OCI-LY7 (cell line): ENCODE measurements at regions of chr1 and their contacts with region 1.

Region 1: GRCh38 chr1:93680757-93681550 is 683 bp downstream of the BCAR3 start:
- DNase-seq: peak; percentile 88
- H3K4me3 ChIP-seq: peak overlapping the region; percentile 82
- H3K27ac ChIP-seq: peak overlapping the region; percentile 64
- H3K4me1 ChIP-seq: peaks cover 57% of the 10 kb centered on the region
- CTCF ChIP-seq: peak; percentile 78

Region 2: DNA sequence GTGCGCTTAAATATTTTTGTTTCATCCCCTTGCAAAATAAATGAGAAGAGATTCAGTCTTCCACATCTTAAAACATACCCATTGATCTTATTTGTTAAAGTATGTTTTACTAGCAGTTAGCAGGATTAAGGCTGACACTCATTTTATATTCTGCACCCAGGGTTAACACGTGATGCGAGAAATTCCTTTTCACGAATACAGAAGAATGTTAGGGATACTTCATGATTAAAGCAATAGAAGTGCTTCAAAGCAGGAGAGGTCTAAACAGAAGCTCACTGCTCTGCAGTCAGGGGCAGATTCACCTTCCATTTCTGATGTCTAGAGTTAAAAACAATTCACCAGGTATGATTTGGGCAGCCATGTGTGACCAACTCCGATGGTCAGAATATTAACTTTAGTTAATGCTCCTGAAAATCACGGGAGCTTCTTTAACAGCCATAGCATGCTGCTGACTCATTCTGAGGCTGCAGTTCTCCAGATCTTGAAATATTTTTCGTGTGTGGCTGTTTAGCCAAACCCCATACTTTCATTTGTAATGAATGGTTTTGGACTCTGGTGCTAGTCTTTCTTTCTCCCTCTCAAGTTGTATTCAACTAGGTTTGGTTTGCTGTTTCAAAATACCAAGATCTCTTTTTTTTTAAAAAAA is 19.0 kb before region 1 on chr1:
- CTCF ChIA-PET with region 1: no interaction called
- POLR2A ChIA-PET with region 1: interaction called, 9 read pairs
- intact Hi-C with region 1: loop called (anchors 2 kb)
- DNase-seq: no peak
- H3K4me3 ChIP-seq: no peak overlapping the region
- H3K27ac ChIP-seq: no peak overlapping the region
- H3K4me1 ChIP-seq: no peaks in the 10 kb centered on the region
- CTCF ChIP-seq: no peak

Region 3: DNA sequence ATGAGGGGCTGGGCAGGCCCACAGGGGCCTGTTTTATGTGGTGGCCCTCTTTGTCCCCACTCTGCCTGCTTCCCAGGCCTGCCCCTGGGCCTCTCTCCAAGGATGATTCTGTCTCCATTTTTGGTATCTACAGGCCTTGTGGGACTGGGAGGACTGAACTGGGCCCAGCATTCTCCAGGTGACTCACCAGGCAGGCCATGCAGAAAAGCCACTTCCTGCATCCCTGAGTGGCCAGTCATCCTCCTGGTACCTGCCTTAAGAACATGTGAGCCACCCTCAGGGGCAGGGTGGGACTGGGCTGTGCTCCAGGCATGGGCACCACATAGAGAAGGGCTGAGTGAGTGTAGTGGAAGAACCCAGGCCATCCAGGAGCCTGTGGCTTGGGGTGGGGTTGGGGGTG is 20.7 kb after region 1 on chr1:
- CTCF ChIA-PET with region 1: interaction called, 12 read pairs
- POLR2A ChIA-PET with region 1: interaction called, 497 read pairs
- intact Hi-C with region 1: loop called (anchors 1 kb)
- DNase-seq: no peak
- H3K4me3 ChIP-seq: no peak overlapping the region
- H3K27ac ChIP-seq: no peak overlapping the region
- H3K4me1 ChIP-seq: peaks cover 78% of the 10 kb centered on the region
- CTCF ChIP-seq: no peak

Region 4: GRCh38 chr1:93715529-93716126 is 34.7 kb after region 1 on chr1:
- CTCF ChIA-PET with region 1: interaction called, 3 read pairs
- POLR2A ChIA-PET with region 1: interaction called, 497 read pairs
- intact Hi-C with region 1: loop called (anchors 5 kb)
- DNase-seq: peak; percentile 78
- H3K4me3 ChIP-seq: peak overlapping the region; percentile 37
- H3K27ac ChIP-seq: peak overlapping the region; percentile 77
- H3K4me1 ChIP-seq: peaks cover 62% of the 10 kb centered on the region
- CTCF ChIP-seq: no peak

Region 5: DNA sequence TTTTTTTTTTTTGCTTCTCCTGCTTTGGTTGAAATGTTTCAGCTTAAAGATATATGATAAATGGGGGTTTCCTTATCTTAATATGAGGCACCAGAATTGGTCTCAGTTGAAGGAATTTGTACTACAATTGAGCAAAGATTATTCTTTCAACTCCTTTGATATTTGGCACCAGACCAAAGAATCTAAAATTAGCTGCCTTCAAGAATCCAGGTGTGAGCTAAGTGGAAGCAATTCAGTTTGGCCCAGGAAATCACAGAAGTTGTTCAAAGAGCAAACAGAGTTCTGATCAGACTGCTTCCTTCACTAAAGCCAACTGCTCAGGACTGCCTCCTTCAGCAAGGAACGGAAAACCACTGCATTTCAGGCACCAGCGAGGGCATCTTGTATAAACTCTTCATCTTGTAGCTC is 68.9 kb after region 1 on chr1:
- CTCF ChIA-PET with region 1: interaction called, 7 read pairs
- POLR2A ChIA-PET with region 1: interaction called, 4 read pairs
- intact Hi-C with region 1: loop called (anchors 1 kb)
- DNase-seq: peak; percentile 89
- H3K4me3 ChIP-seq: peak overlapping the region; percentile 32
- H3K27ac ChIP-seq: peak overlapping the region; percentile 90
- H3K4me1 ChIP-seq: peaks cover 51% of the 10 kb centered on the region
- CTCF ChIP-seq: peak; percentile 85

Region 6: DNA sequence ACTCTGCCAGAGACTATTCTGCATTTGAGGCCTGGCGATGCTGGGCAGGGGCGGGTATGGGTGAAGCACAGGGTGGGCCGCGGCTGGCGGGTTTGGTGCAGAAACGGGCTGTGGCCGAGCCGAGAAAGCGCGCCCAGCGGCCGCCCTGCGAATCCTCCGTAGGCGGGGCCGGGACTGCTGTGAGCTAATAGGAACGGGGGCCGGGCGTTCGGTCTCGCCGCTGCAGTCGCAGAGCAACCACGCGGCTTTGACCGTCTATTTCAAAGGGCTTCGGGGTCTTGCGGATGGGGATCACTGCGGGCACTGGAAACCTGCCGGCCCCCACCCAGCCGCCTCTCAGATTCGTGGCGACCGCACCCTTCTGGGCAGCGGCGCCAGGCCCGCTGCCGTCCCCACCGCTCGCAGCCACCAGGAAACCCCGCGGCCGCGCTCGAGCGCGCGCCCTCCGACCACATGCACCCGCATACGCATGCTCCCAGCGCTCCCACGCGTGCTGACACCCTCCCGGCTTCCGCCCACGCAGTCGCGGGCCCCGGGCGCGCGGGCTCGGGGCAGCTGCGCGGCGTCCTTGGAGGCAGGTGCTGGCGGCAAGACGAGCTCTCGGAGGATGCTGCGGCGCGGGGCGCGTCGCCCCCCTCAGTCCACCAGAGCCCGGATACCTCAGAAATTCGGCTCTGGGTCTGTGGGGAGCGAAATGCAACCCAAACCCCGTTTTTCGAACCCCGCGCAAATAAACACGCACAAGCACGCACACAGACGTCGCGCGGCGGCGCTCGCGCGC is 165.4 kb after region 1 on chr1:
- CTCF ChIA-PET with region 1: no interaction called
- POLR2A ChIA-PET with region 1: interaction called, 3 read pairs
- intact Hi-C with region 1: loop called (anchors 2 kb)
- DNase-seq: peak; percentile 92
- H3K4me3 ChIP-seq: peak overlapping the region; percentile 75
- H3K27ac ChIP-seq: peak overlapping the region; percentile 84
- H3K4me1 ChIP-seq: peaks cover 29% of the 10 kb centered on the region
- CTCF ChIP-seq: peak; percentile 59